ENCODE measurements at regions of chr4 and their contacts with region 1.

Region 1: DNA sequence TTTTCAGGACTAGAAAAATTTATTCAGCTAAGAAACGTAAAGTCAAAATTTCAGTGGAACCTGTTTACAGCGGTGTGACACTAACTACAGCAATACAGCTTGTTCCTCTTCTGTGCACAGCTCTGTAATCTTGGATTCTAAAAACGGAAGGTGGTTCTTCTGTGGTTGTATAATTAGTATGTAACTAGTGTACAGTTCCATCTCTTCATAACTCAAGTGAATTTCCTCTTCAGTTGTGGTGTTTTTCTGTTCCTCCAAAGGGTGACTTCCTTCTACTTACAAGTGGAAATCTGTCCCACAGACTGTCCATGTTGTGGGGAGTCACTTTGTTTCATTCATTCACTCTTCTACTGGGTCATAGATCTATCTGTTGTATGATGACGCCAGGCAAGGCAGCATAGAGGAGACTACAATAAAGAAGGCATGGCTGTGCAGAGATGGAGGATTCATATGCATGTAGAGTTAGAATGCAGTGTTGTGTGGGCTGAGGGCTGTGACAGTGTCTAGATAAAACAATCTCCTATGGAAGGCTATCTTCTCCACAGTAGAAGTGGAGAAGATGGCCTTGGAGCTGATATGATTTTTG is 5.4 kb downstream of the DAPP1 start:
- DNase-seq: peak; percentile 78
- H3K4me3 ChIP-seq: peak overlapping the region; percentile 80
- H3K27ac ChIP-seq: peak overlapping the region; percentile 95
- H3K4me1 ChIP-seq: peaks cover 87% of the 10 kb centered on the region
- CTCF ChIP-seq: no peak

Region 2: DNA sequence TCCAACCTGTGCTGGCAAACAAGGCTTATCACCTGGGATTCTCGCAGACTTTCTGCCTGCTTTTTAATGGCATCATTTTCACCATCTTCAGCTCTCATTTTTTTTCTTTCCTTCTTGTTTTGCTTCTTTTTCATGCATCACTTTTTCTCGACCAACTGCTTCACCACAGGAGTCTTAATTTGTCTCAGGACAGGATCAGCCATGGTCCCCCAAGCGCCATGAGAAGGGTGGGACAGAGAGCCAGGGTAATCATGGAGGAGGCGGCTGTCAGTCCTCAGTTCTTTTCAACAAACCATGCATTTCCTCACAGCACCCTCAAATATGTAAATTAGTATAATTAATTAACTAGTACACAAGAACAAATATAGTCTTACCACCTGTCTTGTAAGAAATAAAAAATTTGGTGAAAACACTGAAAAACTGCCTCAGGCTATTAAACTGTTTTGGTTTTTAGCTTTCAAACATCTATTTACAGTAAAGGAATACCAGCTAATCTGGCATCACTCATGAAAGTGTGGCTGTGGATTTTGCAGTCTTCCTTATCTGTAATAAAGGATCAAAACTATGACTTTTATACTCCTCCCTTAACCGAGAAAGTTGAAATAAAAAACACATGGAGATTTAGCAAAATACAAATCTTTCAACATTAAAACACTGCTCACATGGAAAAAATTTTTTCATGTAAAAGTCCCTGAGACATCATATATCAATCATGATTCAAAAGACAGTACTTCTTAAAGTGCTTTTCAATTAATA is 912.2 kb before region 1 on chr4:
- CTCF ChIA-PET with region 1: no interaction called
- POLR2A ChIA-PET with region 1: no interaction called
- intact Hi-C with region 1: loop called (anchors 5 kb)
- DNase-seq: no peak
- H3K4me3 ChIP-seq: no peak overlapping the region
- H3K27ac ChIP-seq: no peak overlapping the region
- H3K4me1 ChIP-seq: peaks cover 28% of the 10 kb centered on the region
- CTCF ChIP-seq: no peak

Region 3: DNA sequence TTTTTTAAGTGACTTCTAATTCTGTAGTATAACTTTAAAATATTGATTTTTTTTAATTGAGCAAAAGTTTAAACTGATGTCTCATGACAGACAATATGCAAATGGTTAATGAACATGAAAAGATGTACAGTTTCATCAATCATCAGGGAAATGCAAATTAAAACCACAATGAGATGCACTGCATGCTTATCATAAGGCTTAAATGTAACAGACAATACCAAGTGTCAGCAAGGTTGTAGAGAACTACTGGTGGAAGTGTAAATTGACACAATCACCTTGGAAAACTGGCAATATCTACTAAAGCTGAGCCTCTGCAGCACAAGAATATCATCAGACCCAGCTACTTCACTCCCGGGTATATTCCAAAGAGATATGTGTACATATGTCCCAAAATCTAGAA is 75.6 kb before region 1 on chr4:
- CTCF ChIA-PET with region 1: no interaction called
- POLR2A ChIA-PET with region 1: no interaction called
- intact Hi-C with region 1: no loop called
- DNase-seq: no peak
- H3K4me3 ChIP-seq: no peak overlapping the region
- H3K27ac ChIP-seq: no peak overlapping the region
- H3K4me1 ChIP-seq: peaks cover 5% of the 10 kb centered on the region
- CTCF ChIP-seq: no peak

Region 4: GRCh38 chr4:99833756-99834155 is 11.7 kb after region 1 on chr4:
- CTCF ChIA-PET with region 1: no interaction called
- POLR2A ChIA-PET with region 1: interaction called, 25 read pairs
- intact Hi-C with region 1: no loop called
- DNase-seq: no peak
- H3K4me3 ChIP-seq: no peak overlapping the region
- H3K27ac ChIP-seq: no peak overlapping the region
- H3K4me1 ChIP-seq: no peaks in the 10 kb centered on the region
- CTCF ChIP-seq: no peak

Region 5: DNA sequence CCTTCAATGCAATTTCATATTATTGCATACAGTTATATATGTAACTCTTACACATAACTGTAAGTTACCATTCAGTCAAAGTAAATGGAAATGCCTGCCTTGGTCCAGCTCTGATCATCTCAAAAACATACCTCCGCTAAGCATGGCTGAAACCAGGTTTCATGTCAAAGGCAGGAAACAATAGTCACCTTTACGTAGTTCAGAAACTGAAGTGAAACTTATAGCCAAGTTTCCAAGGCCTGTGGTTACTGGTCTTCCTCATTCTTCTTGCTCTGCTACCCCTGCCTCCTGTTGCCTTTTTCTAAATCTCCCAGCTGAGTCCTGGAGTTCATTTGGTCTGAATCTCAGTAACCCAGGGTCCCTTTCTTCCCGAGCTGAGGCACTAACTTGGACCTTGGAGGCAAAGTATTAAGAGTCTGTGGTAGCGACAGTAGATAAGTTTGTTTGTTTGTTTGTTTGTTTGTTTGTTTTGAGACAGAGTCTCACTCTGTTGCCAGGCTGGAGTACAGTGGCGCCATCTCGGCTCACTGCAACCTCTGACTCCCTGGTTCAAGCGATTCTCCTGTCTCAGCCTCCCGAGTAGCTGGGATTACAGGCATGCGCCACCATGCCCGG is 25.5 kb after region 1 on chr4:
- CTCF ChIA-PET with region 1: interaction called, 3 read pairs
- POLR2A ChIA-PET with region 1: interaction called, 30 read pairs
- intact Hi-C with region 1: loop called (anchors 2 kb)
- DNase-seq: peak; percentile 83
- H3K4me3 ChIP-seq: peak overlapping the region; percentile 40
- H3K27ac ChIP-seq: peak overlapping the region; percentile 75
- H3K4me1 ChIP-seq: peaks cover 49% of the 10 kb centered on the region
- CTCF ChIP-seq: no peak

Region 6: DNA sequence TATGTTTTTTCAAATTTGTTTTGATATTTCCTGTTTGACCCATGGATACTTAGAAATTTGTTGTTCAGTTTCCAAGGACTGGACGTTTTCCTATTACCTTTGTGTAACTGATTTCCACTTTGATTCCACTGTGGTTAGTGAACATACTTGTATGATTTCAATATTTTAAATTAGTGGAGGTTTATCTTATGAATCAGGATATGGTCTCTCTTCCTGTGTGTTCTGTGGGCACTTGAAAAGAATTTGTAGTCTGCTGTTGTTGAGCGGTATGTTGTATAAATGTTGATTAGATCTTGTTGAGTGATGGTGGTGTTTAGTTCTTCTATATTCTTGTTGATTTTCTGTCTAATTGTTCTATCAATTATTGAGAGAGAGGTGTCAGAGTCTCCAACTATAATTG is 93.4 kb after region 1 on chr4:
- CTCF ChIA-PET with region 1: no interaction called
- POLR2A ChIA-PET with region 1: no interaction called
- intact Hi-C with region 1: no loop called
- DNase-seq: no peak
- H3K4me3 ChIP-seq: no peak overlapping the region
- H3K27ac ChIP-seq: no peak overlapping the region
- H3K4me1 ChIP-seq: no peaks in the 10 kb centered on the region
- CTCF ChIP-seq: no peak